Activated T-helper 1 cell treated with anti-CD3 and anti-CD28 coated beads, Interleukin-12 subunit alpha, Interleukin-12 subunit beta, Interleukin-2, Interleukin-4 antibody, amounts not matched to agents 30 ng/mL and 10 ng/mL and 1 ng/mL, durations not matched to agents 14 hours and 24 hours and 36 hours (primary cell): ENCODE measurements at regions of chr1 and their contacts with region 1.

Region 1: DNA sequence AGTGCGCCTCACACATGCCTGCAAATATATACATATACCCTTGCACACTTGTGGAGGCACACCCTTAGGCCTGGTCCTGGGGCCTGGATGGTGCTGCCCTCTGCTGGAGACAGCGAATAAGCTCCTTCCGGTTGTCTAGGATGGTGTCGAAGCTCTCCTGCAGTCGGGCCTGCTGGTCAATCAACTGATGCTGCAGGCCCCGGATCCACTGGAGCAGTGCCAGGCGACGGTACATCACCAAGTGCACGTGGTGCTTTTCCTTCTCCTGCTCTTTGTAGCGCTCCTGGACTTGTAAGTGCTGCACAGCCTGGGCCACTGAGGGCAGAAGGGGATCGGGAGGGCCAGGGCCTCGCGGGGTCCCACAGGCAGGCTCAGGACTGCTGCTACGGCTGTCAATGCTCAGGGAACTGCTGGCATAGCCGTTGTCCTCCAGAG is 3.1 kb downstream of the C1orf216 start:
- DNase-seq: peak; percentile 69
- H3K4me3 Mint-ChIP-seq: peak overlapping the region; percentile 56
- H3K27ac Mint-ChIP-seq: no peak overlapping the region
- H3K4me1 Mint-ChIP-seq: peaks cover 37% of the 10 kb centered on the region
- H3K27me3 Mint-ChIP-seq: peaks cover 4% of the 10 kb centered on the region

Region 2: GRCh38 chr1:35505908-35506798 is 209.4 kb before region 1 on chr1:
- intact Hi-C with region 1: loop called (anchors 1 kb)
- DNase-seq: peak; percentile 70
- H3K4me3 Mint-ChIP-seq: peak overlapping the region; percentile 69
- H3K27ac Mint-ChIP-seq: peak overlapping the region; percentile 94
- H3K4me1 Mint-ChIP-seq: peaks cover 76% of the 10 kb centered on the region
- H3K27me3 Mint-ChIP-seq: no peaks in the 10 kb centered on the region

Region 3: DNA sequence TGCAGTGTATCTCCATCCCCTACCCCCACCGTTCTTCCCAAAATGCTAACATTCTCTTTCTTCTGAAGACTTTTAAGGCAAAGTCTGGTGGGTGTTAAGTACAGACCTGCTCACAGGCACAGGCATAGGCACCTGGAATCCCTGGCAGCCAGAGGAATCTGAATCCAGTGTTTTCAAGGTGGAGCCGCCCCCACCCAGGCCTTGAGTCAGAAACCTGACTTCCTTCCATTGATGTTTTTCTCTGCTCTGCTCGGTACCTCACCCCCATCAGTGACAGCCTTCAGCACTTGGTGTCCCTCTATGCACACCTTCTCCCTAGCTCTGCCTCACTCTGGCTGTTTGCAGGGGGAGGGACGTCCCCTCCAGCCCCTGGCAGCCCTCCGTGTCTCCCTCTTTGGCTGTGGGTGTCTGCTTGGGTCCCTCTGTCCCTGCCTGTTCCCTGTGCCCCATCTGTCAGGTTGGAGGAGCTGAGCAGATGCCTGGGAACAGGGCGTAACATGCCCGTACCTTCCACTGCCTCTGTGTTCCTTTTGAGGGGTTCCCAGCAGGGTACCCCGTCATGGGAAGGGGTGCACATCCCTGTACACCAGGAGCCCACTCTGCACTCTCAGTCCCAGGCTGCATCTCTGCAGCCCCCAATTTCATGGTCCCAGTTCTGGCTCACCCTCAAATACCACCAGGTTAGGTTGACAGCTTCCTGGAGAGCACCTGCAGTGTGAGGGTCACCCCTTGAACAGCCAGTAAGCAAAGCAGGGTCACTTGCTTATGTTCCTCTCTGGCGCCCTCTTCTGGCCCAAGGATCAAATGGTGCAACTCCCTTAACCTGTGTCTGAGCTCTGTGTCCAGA is 151.3 kb before region 1 on chr1:
- intact Hi-C with region 1: loop called (anchors 1 kb)
- DNase-seq: peak; percentile 69
- H3K4me3 Mint-ChIP-seq: peak overlapping the region; percentile 3
- H3K27ac Mint-ChIP-seq: no peak overlapping the region
- H3K4me1 Mint-ChIP-seq: peaks cover 42% of the 10 kb centered on the region
- H3K27me3 Mint-ChIP-seq: no peaks in the 10 kb centered on the region

Region 4: GRCh38 chr1:35641233-35641866 is 74.2 kb before region 1 on chr1 and contains the start of gene PSMB2:
- intact Hi-C with region 1: loop called (anchors 1 kb)
- DNase-seq: peak; percentile 95
- H3K4me3 Mint-ChIP-seq: peak within 1 kb of the TSS; percentile 99
- H3K27ac Mint-ChIP-seq: peak within 1 kb of the TSS; percentile 99
- H3K4me1 Mint-ChIP-seq: peaks cover 40% of the 10 kb centered on the region
- H3K27me3 Mint-ChIP-seq: peaks cover 26% of the 10 kb centered on the region
- total RNA-seq, gene PSMB2: 125 and 126 TPM in 2 replicates